B cell (primary cell): ENCODE measurements at regions of chr2 and their contacts with region 1.

Region 1: GRCh38 chr2:232327105-232328041 is 51.2 kb upstream of the ALPP start:
- DNase-seq: peak; percentile 70
- ATAC-seq: peak; percentile 82
- H3K4me3 ChIP-seq: no peak overlapping the region
- H3K4me3 Mint-ChIP-seq: no peak overlapping the region
- H3K27ac ChIP-seq: no peak overlapping the region
- H3K27ac Mint-ChIP-seq: no peak overlapping the region
- H3K4me1 ChIP-seq: no peaks in the 10 kb centered on the region
- H3K4me1 Mint-ChIP-seq: peaks cover 8% of the 10 kb centered on the region
- H3K27me3 ChIP-seq: no peaks in the 10 kb centered on the region
- H3K27me3 Mint-ChIP-seq: no peaks in the 10 kb centered on the region
- CTCF ChIP-seq: peak; percentile 84

Region 2: DNA sequence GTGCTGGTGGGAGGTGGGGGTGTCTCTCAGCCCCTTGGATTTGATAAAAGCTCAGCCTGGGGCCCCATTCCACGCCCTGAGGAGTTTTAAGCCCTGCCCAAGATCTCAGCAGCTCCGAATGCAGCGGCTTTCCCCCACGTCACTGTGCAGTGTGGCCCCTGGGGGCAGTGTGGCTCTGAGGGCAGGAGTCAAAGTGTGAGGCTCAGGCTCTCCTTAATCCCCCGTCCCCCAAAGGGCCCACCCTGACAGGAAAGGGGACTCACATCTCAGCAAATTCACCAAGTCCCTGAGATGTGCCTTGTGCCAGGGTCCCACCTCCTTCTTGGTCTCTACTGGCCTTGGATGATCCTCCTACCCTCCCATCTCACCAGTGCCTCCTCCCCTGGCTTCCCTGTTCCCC is 426.4 kb before region 1 on chr2:
- CTCF ChIA-PET with region 1: interaction called, 24 read pairs
- POLR2A ChIA-PET with region 1: no interaction called
- intact Hi-C with region 1: no loop called
- DNase-seq: no peak
- ATAC-seq: no peak
- H3K4me3 ChIP-seq: no peak overlapping the region
- H3K4me3 Mint-ChIP-seq: no peak overlapping the region
- H3K27ac ChIP-seq: no peak overlapping the region
- H3K27ac Mint-ChIP-seq: no peak overlapping the region
- H3K4me1 ChIP-seq: no peaks in the 10 kb centered on the region
- H3K4me1 Mint-ChIP-seq: no peaks in the 10 kb centered on the region
- H3K27me3 ChIP-seq: no peaks in the 10 kb centered on the region
- H3K27me3 Mint-ChIP-seq: peaks cover 2% of the 10 kb centered on the region
- CTCF ChIP-seq: no peak

Region 3: DNA sequence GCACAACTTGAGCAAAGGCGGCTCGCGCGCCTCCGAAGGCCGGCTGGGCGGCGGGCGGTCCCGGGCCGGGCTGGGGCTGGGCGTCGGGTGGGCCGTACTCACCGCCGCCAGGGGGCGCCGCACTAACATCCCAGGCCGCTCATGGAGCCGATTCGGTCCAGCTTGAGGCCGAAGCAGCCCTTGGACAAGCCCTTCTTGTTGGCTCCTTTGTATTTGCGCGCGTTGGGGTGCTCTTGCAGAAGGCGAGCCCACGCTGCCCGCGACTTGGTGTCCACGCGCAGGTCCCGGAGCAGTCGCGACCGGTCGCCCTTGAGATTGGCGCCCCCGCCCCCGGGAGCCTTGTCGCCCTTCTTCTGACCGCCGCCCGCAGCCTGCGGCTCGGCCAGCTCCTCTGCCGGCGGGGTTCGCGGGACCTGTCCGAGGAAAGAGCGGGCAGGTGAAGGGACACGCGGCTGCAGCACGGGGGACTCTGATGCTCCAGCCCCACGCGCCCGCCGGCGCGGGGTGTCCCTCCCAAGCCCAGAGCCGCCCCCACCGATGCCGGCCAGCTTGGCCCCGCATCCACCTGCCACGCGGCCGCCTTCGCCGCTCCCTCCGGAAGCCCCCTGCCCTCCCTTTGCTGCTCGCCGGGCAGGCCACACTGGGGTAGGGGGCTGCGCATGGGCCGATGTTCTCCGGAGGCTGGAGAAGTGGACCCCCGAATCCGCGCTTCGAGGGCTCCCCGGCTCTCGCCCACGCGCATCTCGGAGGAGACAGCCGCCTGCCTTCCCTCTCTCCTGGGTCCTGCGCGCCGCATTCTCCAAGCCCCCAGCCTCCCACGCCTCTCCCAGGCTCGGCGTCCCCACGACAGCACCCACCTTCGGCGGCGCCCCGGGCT is 401.8 kb before region 1 on chr2:
- CTCF ChIA-PET with region 1: interaction called, 12 read pairs
- POLR2A ChIA-PET with region 1: no interaction called
- intact Hi-C with region 1: no loop called
- DNase-seq: peak; percentile 80
- ATAC-seq: peak; percentile 75
- H3K4me3 ChIP-seq: peak overlapping the region in 4 of 5 experiments; percentile 29 to 57 (median 46)
- H3K4me3 Mint-ChIP-seq: peak overlapping the region; percentile 77
- H3K27ac ChIP-seq: no peak overlapping the region
- H3K27ac Mint-ChIP-seq: no peak overlapping the region
- H3K4me1 ChIP-seq: peaks cover 27% of the 10 kb centered on the region in 2 donors
- H3K4me1 Mint-ChIP-seq: peaks cover 25% of the 10 kb centered on the region
- H3K27me3 ChIP-seq: peaks cover 0 to 57% (median 18%) of the 10 kb centered on the region in 4 experiments
- H3K27me3 Mint-ChIP-seq: peaks cover 41% of the 10 kb centered on the region
- CTCF ChIP-seq: peak; percentile 86

Region 4: DNA sequence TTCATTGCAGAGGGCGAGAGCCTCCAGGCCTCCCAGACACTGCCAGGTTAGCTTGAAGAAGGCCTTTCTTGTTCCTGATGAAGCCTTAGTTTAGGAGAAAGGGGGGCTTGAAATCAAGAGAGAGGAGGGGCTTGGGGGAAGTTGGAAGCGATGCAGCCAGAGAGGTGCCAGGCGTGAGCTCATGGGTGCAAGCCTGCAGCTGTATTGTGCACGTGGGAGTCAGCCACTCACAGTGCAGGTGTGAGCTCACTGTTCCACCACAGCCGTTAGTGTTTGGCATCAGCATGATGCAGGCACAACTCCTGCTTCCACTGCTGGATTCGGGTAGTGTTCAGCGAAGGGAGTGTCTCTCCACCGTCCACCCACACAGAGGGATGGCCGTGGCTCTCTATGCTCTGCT is 17.3 kb before region 1 on chr2:
- CTCF ChIA-PET with region 1: interaction called, 33 read pairs
- POLR2A ChIA-PET with region 1: no interaction called
- intact Hi-C with region 1: no loop called
- DNase-seq: no peak
- ATAC-seq: no peak
- H3K4me3 ChIP-seq: no peak overlapping the region
- H3K4me3 Mint-ChIP-seq: no peak overlapping the region
- H3K27ac ChIP-seq: no peak overlapping the region
- H3K27ac Mint-ChIP-seq: no peak overlapping the region
- H3K4me1 ChIP-seq: peaks cover 9 to 12% of the 10 kb centered on the region in 2 donors
- H3K4me1 Mint-ChIP-seq: peaks cover 16% of the 10 kb centered on the region
- H3K27me3 ChIP-seq: no peaks in the 10 kb centered on the region
- H3K27me3 Mint-ChIP-seq: no peaks in the 10 kb centered on the region
- CTCF ChIP-seq: no peak

Region 5: DNA sequence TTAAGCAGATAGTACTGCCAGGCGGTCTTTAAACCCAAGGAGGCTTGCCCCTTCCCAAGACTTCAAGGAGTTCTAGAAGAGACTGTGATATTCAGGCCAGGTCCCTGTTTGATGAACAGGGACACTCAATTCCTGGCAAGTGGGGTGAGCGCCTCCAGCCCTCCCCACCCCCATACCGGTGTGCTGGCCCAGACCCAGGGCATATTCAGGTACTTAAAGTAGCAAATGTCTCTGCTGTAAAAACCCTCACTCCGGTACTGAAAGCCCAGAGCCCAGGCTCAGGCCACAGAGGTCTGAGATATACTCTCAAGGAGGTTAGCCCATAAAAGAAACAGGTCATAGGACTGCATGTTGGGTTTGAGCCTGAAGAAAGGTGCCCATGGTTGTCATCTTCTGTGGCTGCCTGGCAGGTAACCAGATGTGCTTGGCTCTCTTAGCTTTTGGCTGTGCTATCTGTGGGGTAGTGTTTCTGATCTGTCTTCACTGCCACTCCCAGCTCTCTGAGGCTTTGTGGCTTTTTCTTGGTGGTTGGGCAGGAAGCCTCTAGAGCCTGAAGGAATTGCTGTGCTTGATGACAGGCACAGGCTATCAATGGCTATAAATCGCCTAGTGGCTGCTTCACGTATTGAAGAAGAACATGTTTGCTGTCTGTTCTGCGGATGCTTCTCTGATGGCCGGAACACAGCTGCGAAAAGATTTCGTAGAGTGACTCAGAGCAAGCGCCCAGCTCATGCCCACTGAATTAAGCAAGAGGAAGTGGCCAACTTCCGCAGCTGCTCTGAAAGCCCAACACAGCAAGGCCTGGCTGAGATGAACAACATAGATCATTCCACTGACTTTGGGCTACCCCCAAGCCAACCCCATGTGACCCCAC is 12.1 kb before region 1 on chr2:
- CTCF ChIA-PET with region 1: interaction called, 33 read pairs
- POLR2A ChIA-PET with region 1: no interaction called
- intact Hi-C with region 1: no loop called
- DNase-seq: peak; percentile 53
- ATAC-seq: peak; percentile 94
- H3K4me3 ChIP-seq: no peak overlapping the region
- H3K4me3 Mint-ChIP-seq: peak overlapping the region; percentile 69
- H3K27ac ChIP-seq: peak overlapping the region; percentile 24 to 44
- H3K27ac Mint-ChIP-seq: peak overlapping the region; percentile 78
- H3K4me1 ChIP-seq: peaks cover 22 to 26% of the 10 kb centered on the region in 2 donors
- H3K4me1 Mint-ChIP-seq: peaks cover 32% of the 10 kb centered on the region
- H3K27me3 ChIP-seq: no peaks in the 10 kb centered on the region
- H3K27me3 Mint-ChIP-seq: no peaks in the 10 kb centered on the region
- CTCF ChIP-seq: peak; percentile 15